ENCODE measurements at regions of chr10 and their contacts with region 1.

Region 1: GRCh38 chr10:100878291-100878910 is 34.4 kb upstream of the SLF2 start:
- DNase-seq: peak; percentile 66
- H3K4me3 ChIP-seq: no peak overlapping the region
- H3K27ac ChIP-seq: no peak overlapping the region
- H3K4me1 ChIP-seq: no peaks in the 10 kb centered on the region
- H3K27me3 ChIP-seq: no peaks in the 10 kb centered on the region
- CTCF ChIP-seq: peak; percentile 53

Region 2: GRCh38 chr10:100433253-100434240 is 444.9 kb before region 1 on chr10:
- intact Hi-C with region 1: loop called (anchors 10 kb)
- DNase-seq: peak; percentile 99
- H3K4me3 ChIP-seq: no peak overlapping the region
- H3K27ac ChIP-seq: no peak overlapping the region
- H3K4me1 ChIP-seq: no peaks in the 10 kb centered on the region
- H3K27me3 ChIP-seq: no peaks in the 10 kb centered on the region
- CTCF ChIP-seq: peak; percentile 96

Region 3: DNA sequence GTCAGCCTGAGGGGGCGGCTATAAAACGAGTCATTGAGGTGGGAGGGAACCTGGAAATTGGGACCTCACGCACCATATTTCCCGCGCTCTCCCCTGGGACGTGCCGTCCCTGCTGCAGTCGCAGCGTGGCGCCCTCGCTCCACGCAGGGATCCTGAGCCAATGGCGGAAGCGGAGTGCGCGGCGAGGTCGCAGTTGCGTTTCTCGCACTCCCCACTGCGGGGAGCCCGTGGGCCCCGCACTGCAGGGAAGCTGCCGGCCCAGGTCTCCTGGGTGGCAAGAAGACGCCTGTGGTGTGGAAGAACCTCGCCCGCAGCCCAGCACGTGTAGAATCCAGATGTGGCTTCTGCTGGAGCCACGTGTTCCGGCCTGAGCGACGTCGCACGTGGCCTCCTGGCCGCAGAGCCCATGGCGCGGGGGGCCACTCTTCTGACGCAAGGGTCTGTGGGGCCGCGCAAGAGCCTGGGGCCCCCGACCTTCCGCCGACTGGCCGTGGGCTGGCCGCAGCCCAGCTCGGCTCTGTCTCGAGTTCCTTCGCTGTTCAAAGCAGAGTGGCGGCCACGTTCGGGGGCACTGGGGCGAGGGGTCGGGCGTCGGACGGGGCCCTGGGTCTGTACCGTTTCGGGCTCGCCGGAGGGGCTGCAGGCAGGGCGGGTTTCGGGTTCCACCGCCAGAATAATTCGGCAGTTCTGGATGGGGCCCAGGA is 316.2 kb before region 1 on chr10:
- intact Hi-C with region 1: loop called (anchors 5 kb)
- DNase-seq: peak; percentile 67
- H3K4me3 ChIP-seq: no peak overlapping the region
- H3K27ac ChIP-seq: no peak overlapping the region
- H3K4me1 ChIP-seq: peaks cover 9% of the 10 kb centered on the region
- H3K27me3 ChIP-seq: peaks cover 14% of the 10 kb centered on the region
- CTCF ChIP-seq: peak; percentile 95

Region 4: DNA sequence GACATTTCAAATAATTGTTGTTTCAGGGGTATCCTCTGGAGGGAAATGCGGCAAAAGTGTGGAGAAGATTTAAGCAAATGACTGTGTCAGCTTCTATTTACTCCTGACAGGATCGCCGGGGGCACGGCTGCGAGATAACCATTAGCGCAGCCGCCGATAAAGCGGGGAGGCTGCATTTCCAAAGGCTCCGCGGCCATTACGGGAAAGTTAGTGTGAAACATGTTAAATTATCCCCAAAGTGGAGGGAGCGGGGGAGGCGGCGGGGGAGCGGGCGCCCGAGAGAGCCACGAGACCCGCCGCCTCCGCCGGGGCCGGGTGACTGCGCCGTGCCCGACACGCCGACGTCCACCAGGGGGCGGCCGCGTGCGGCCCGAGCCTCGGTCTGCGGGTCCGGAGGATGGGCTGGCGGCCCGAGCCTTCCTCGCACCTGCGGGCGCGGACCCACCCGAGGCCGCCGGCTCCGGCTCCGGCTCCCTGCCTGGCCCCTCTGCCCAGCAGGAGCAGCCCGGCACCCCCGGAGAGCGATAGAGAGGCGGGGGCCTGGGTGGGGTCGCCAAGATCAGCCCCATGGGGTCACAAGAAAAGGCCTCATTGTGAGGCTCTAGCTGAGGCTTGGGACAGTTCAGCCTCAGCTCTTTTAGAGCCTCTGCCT is 207.4 kb before region 1 on chr10:
- intact Hi-C with region 1: loop called (anchors 5 kb)
- DNase-seq: peak; percentile 42
- H3K4me3 ChIP-seq: no peak overlapping the region
- H3K27ac ChIP-seq: no peak overlapping the region
- H3K4me1 ChIP-seq: no peaks in the 10 kb centered on the region
- H3K27me3 ChIP-seq: peaks cover 39% of the 10 kb centered on the region
- CTCF ChIP-seq: peak; percentile 77

Region 5: DNA sequence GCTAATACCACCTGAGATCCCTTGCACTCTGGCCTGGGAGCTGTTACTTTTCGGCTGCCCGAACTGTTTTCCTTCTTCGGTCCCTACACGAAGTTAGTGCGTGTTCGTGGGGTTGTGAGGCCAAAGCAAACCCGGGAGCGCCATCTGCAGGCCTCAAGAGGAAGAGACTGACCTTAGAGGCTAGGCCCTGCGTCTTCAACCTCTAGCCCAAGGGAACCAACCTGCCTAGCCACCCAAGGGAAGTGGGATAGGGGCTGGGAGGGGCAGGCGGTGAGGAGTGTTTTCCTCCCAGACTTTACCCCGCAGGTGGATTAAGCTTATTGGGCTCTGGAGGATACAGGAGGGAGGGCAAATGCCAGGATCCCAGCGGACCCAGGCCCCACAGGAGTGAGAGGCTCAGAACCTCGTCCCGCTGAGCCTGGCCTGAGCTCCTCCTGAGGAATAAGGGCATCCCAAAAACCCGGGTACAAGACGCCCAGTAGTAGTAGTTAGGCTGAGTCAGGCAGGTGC is 134.7 kb before region 1 on chr10:
- intact Hi-C with region 1: loop called (anchors 10 kb)
- DNase-seq: no peak
- H3K4me3 ChIP-seq: no peak overlapping the region
- H3K27ac ChIP-seq: no peak overlapping the region
- H3K4me1 ChIP-seq: no peaks in the 10 kb centered on the region
- H3K27me3 ChIP-seq: peaks cover 94% of the 10 kb centered on the region
- CTCF ChIP-seq: peak; percentile 50

Measured in colonic mucosa (tissue), 4 donors.